Ascending aorta (tissue), 2 donors: ENCODE measurements at regions of chr7 and their contacts with region 1.

Region 1: GRCh38 chr7:4641667-4642467 is 40.2 kb upstream of the FOXK1 start:
- DNase-seq: peak; percentile 63 to 97
- H3K4me3 ChIP-seq: peak overlapping the region; percentile 67 to 76
- H3K27ac ChIP-seq: peak overlapping the region; percentile 87 to 94
- H3K4me1 ChIP-seq: peaks cover 0 to 4% of the 10 kb centered on the region in 2 donors
- H3K27me3 ChIP-seq: no peaks in the 10 kb centered on the region
- CTCF ChIP-seq: peak; percentile 15 to 90 (median 41)

Region 2: DNA sequence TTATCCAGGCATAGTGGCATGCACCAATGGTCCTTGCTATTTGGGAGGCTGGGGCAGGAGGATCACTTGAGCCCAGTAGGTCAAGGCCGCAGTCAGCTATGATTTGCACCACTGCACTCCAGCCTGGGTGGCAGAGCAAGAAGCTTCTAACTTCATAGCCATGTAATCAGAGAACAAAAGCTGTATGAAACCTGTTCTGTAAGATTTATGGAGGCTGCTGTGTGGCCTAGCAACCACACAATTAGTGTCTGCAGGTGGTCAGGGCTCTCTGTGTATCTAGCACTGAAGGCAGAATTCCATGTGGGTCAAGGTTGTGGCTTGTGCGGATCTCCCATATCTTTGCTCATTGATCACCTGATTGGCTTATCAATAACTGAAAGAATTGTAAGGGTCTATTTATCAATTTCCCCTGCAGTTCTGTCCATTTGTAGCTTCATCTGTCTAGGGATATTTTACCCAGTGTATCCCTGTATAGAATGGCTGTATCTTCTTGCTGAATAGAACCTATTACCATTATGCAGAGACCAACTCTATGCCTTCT is 181.2 kb before region 1 on chr7:
- intact Hi-C with region 1: no loop called
- DNase-seq: no peak
- H3K4me3 ChIP-seq: no peak overlapping the region
- H3K27ac ChIP-seq: no peak overlapping the region
- H3K4me1 ChIP-seq: peaks cover 5 to 12% of the 10 kb centered on the region in 2 donors
- H3K27me3 ChIP-seq: no peaks in the 10 kb centered on the region
- CTCF ChIP-seq: no peak

Region 3: DNA sequence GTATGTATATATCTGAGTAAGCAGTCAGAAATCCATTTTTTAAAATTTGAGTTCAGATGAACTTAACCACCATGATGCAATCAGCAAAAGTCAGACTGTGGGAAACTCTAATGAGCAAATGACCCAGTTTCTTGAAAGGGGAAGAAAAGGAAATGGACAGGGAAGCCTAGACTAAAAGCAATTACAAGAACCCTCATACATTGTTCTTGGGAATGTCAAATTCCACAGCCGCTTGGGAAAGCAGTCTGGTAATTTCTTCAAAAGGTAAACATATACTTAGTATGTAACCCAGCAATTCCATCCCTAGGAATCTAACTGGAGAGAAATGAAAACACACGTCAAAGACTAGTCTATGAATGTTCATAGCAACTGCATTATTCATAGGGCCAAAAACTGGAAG is 23.8 kb after region 1 on chr7:
- intact Hi-C with region 1: loop called (anchors 1 kb)
- DNase-seq: no peak
- H3K4me3 ChIP-seq: no peak overlapping the region
- H3K27ac ChIP-seq: peak overlapping the region; percentile 77 to 82
- H3K4me1 ChIP-seq: peaks cover 7 to 17% of the 10 kb centered on the region in 2 donors
- H3K27me3 ChIP-seq: no peaks in the 10 kb centered on the region
- CTCF ChIP-seq: no peak

Region 4: GRCh38 chr7:4738711-4739527 is 97.1 kb after region 1 on chr7:
- intact Hi-C with region 1: loop called (anchors 2 kb)
- DNase-seq: peak in 1 of 2 donors; percentile 87
- H3K4me3 ChIP-seq: peak overlapping the region; percentile 45 to 59
- H3K27ac ChIP-seq: peak overlapping the region; percentile 76 to 88
- H3K4me1 ChIP-seq: peaks cover 0 to 22% of the 10 kb centered on the region in 2 donors
- H3K27me3 ChIP-seq: no peaks in the 10 kb centered on the region
- CTCF ChIP-seq: no peak

Region 5: GRCh38 chr7:4906682-4907081 is 264.8 kb after region 1 on chr7:
- intact Hi-C with region 1: no loop called
- DNase-seq: no peak
- H3K4me3 ChIP-seq: no peak overlapping the region
- H3K27ac ChIP-seq: no peak overlapping the region
- H3K4me1 ChIP-seq: no peaks in the 10 kb centered on the region
- H3K27me3 ChIP-seq: no peaks in the 10 kb centered on the region
- CTCF ChIP-seq: no peak

Region 6: DNA sequence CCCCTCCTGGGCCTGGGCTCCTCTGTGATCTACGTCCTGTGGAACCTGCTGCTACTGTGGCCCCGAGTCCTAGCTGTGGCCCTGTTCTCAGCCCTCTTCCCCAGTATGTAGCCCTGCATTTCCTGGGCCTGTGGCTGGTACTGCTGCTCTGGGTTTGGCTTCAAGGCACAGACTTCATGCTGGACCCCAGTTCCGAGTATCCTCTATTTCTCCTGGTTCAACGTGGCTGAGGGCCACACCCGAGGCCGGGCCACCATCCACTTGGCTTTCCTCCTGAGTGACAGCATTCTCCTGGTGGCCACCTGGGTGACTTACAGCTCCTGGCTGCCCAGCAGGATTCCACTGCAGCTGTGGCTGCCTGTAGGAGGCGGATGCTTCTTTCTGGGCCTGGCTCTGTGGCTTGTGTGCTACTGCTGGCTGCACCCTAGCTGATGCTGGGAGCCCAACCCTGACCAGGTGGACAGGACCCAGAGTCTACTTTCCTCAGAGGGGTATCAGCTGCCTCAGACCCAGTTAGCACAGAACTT is 354.9 kb after region 1 on chr7:
- intact Hi-C with region 1: no loop called
- DNase-seq: no peak
- H3K4me3 ChIP-seq: no peak overlapping the region
- H3K27ac ChIP-seq: no peak overlapping the region
- H3K4me1 ChIP-seq: no peaks in the 10 kb centered on the region
- H3K27me3 ChIP-seq: no peaks in the 10 kb centered on the region
- CTCF ChIP-seq: no peak